ENCODE measurements at regions of chr2 and their contacts with region 1.

Region 1: DNA sequence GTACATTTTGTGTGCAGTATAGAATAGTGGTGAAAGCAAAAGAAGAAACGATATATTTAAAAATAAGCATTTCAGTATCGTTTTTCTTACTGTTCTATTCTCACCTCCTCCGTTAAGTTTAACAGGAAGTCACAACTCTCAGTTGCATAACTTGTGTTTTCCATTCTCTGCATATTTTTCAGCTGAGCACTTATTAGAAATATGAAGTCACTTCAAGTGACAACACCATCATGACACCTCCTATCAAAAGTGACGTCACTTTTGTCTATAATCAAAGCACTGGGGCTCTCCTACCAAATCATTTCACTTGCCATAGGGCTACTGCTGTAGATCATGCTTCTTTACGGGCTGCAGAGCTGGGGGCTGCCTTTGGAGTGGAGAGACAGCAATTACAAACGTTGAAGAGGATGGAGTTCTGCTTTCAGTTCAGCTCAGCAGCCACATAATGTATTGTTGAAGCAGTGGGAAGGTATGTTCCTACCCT is 36.3 kb downstream of the STAT4 start:
- DNase-seq: peak; percentile 26
- H3K4me3 Mint-ChIP-seq: peak overlapping the region; percentile 69
- H3K27ac Mint-ChIP-seq: peak overlapping the region; percentile 96
- H3K4me1 Mint-ChIP-seq: peaks cover 63% of the 10 kb centered on the region
- H3K27me3 Mint-ChIP-seq: no peaks in the 10 kb centered on the region

Region 2: DNA sequence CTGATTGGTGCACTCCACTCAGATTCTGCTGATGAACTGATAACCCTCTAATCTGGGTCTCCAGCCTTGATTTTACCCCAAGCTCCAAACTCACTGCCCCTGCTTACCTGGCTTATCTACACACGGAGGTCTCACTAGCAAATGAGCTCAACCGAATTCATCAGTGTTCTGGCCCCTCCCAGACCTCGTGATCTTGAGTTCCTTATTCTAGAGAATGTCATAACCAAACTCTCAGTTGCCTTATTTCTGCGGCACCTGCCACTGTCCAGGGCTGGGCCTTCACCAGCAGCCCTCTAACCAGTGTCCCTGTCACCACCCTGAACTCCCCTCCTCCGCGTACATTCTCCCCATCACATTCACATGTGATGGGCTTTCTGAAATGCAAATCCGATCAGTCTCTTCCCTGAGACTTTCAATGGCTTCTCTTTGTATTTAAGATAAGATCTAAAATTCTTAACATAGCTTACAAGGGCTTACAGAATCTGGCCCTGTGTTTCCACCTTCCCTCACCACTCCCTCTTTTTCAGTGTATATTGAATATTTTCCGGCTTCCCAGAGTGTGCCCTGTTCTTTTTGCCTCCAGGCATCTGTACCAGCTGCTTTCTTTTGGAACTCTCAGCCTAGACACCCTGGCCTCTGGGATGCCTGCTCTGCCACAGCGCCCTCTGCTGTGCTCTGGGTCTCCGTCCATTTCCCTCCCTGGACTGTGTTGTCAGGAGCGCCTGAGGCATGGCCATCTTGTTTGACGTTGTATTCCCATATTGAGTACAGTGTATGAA is 434.4 kb before region 1 on chr2:
- intact Hi-C with region 1: loop called (anchors 2 kb)
- DNase-seq: peak; percentile 27
- H3K4me3 Mint-ChIP-seq: peak overlapping the region; percentile 69
- H3K27ac Mint-ChIP-seq: peak overlapping the region; percentile 87
- H3K4me1 Mint-ChIP-seq: peaks cover 53% of the 10 kb centered on the region
- H3K27me3 Mint-ChIP-seq: no peaks in the 10 kb centered on the region

Region 3: GRCh38 chr2:190843874-190844699 is 270.4 kb before region 1 on chr2:
- intact Hi-C with region 1: loop called (anchors 1 kb)
- DNase-seq: peak; percentile 17
- H3K4me3 Mint-ChIP-seq: peak overlapping the region; percentile 44
- H3K27ac Mint-ChIP-seq: peak overlapping the region; percentile 96
- H3K4me1 Mint-ChIP-seq: peaks cover 15% of the 10 kb centered on the region
- H3K27me3 Mint-ChIP-seq: no peaks in the 10 kb centered on the region

Region 4: DNA sequence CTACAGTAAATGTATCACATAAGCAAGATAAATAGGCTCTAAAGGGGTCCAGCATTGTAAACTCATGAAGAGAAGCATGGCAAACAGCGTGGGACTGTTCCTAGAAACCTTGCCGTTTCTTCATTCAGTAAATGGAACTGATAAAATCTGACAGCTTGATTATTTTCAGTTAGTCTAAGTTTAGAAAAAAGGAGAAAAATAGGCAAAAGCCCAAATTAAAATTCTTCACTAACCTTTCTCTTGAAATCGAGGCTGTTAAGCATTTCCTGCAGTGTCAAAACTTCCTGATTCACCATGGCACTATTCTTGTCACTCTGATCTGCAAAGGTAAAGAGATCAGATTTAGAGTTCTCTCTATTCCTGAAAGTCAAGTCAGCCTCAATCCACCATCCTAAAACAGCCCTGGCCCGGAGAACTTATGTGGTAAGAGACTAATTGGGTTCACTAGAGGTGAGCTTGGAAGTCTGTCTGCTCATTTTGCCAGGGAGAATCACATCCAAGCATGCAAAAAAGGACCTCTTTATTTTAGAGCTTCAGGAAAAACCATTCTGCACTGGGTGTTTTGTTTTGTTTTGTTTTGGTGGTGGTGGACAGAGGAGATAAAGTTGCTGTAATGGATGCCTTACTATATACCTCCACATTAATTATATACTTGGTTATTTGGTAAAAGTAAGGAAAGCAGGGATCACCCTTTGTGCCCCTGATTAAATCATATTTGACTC is 48.1 kb before region 1 on chr2:
- intact Hi-C with region 1: loop called (anchors 2 kb)
- DNase-seq: no peak
- H3K4me3 Mint-ChIP-seq: peak overlapping the region; percentile 78
- H3K27ac Mint-ChIP-seq: peak overlapping the region; percentile 79
- H3K4me1 Mint-ChIP-seq: peaks cover 90% of the 10 kb centered on the region
- H3K27me3 Mint-ChIP-seq: no peaks in the 10 kb centered on the region

Region 5: DNA sequence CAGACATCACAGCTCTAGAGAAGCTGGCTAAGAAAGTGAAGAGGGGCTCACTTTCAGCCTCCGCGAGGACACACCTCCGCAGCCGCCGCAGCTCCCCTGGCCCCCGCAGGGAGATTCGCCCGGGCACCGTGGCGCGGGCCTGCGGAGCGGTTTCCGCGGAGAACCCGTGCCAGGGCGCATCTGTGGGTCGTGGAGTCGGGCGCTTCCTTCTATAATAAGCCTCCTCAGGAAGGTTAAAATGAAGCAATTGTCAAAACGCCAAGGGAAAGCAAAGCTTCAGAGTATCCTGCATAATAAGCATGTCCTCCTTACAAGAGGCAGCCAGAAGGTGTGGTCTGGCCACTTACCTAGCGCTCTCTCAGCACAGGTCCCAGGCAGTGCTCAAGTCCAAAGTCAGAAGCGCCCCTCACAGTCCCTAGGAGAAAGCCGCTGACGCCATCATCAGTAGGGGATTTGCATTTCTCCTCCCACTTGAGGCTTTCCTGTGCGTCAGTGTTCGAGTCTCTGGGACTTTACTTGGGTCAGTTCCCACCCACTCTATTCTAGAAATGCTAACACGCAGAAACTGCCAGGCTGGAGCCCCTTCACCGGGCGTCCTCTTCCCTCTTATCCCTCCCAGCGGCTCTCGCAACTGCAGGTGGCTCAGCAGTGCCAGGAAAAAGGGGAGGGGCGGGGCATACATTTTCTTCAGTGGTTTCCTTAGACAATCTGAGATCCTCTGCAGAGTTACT is 36.3 kb after region 1 on chr2 and contains the start of gene STAT4:
- intact Hi-C with region 1: loop called (anchors 1 kb)
- DNase-seq: peak; percentile 78
- H3K4me3 Mint-ChIP-seq: peak within 1 kb of the TSS; percentile 95
- H3K27ac Mint-ChIP-seq: peak within 1 kb of the TSS; percentile 95
- H3K4me1 Mint-ChIP-seq: peaks cover 85% of the 10 kb centered on the region
- H3K27me3 Mint-ChIP-seq: no peaks in the 10 kb centered on the region
- total RNA-seq, gene STAT4: 57.4 and 62.1 TPM in 2 replicates

Region 6: DNA sequence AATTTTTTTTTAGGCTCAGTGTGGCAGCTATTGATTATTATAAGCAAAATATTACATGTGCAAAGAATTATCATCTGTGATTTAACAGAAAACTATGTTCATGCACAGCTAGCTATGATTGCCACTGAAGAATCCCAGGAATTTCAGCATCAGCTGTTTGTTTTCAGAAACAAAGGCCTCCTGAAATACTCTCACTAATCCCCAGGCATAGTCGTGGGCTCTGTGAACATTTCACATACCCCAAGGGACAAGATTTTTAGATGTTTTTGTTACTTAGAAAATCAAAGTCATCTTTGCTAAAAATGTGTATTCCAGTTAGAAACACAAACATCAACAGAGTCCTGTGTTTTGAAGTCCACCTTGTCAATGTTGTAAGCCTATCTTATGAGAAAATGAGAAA is 286.8 kb after region 1 on chr2:
- intact Hi-C with region 1: no loop called
- DNase-seq: no peak
- H3K4me3 Mint-ChIP-seq: no peak overlapping the region
- H3K27ac Mint-ChIP-seq: no peak overlapping the region
- H3K4me1 Mint-ChIP-seq: no peaks in the 10 kb centered on the region
- H3K27me3 Mint-ChIP-seq: no peaks in the 10 kb centered on the region

Region 7: GRCh38 chr2:191617575-191617974 is 503.1 kb after region 1 on chr2:
- intact Hi-C with region 1: loop called (anchors 1 kb)
- DNase-seq: peak; percentile 64
- H3K4me3 Mint-ChIP-seq: peak overlapping the region; percentile 20
- H3K27ac Mint-ChIP-seq: peak overlapping the region; percentile 90
- H3K4me1 Mint-ChIP-seq: peaks cover 53% of the 10 kb centered on the region
- H3K27me3 Mint-ChIP-seq: no peaks in the 10 kb centered on the region

Region 8: GRCh38 chr2:191811807-191812602 is 697.6 kb after region 1 on chr2:
- intact Hi-C with region 1: no loop called
- DNase-seq: no peak
- H3K4me3 Mint-ChIP-seq: no peak overlapping the region
- H3K27ac Mint-ChIP-seq: no peak overlapping the region
- H3K4me1 Mint-ChIP-seq: no peaks in the 10 kb centered on the region
- H3K27me3 Mint-ChIP-seq: peaks cover 21% of the 10 kb centered on the region

Region 9: DNA sequence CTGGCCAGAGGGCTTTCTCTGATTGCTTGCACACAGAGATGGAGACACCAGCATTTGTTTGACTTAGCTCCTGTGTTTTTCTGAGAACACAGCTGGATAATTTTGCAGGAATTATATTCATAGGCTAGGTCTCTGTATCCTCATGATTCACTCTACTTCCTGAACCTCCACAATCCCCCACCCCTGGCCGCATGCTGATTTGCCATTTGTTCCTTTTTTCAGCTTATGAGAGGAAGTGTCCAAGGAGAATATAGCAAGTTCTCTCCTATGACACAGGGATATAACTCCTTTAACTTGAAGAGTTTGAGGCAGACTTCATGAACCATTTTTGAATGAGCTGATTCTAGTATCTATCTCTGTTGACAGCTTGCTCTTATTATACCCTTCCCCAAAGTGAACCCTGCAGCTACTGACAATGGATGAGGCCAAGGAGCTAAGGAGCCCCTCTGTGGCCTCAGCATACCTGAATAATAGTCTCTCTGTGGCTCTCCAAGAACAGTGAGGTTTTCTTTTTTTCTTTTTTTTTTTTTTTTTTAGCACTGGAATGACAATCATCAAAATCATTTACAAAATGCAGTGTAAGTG is 717.1 kb after region 1 on chr2:
- intact Hi-C with region 1: no loop called
- DNase-seq: no peak
- H3K4me3 Mint-ChIP-seq: no peak overlapping the region
- H3K27ac Mint-ChIP-seq: no peak overlapping the region
- H3K4me1 Mint-ChIP-seq: no peaks in the 10 kb centered on the region
- H3K27me3 Mint-ChIP-seq: peaks cover 21% of the 10 kb centered on the region